Adrenal gland (tissue), 19 donors: ENCODE measurements at regions of chr1 and their contacts with region 1.

Region 1: GRCh38 chr1:55284852-55285251 is 69.7 kb upstream of the USP24 start:
- DNase-seq: peak in 6 of 7 donors; percentile 30 to 69 (median 44)
- H3K4me3 ChIP-seq: no peak overlapping the region
- H3K27ac ChIP-seq: no peak overlapping the region
- H3K4me1 ChIP-seq: no peaks in the 10 kb centered on the region
- H3K27me3 ChIP-seq: peaks cover 4% of the 10 kb centered on the region
- CTCF ChIP-seq: peak in 5 of 6 experiments; percentile 32 to 75 (median 55)
- POLR2A ChIP-seq: no peak

Region 2: GRCh38 chr1:54781023-54781723 is 503.7 kb before region 1 on chr1:
- intact Hi-C with region 1: no loop called
- DNase-seq: no peak
- H3K4me3 ChIP-seq: no peak overlapping the region
- H3K27ac ChIP-seq: no peak overlapping the region
- H3K4me1 ChIP-seq: no peaks in the 10 kb centered on the region
- H3K27me3 ChIP-seq: peaks cover 9% of the 10 kb centered on the region
- CTCF ChIP-seq: no peak
- POLR2A ChIP-seq: no peak

Region 3: DNA sequence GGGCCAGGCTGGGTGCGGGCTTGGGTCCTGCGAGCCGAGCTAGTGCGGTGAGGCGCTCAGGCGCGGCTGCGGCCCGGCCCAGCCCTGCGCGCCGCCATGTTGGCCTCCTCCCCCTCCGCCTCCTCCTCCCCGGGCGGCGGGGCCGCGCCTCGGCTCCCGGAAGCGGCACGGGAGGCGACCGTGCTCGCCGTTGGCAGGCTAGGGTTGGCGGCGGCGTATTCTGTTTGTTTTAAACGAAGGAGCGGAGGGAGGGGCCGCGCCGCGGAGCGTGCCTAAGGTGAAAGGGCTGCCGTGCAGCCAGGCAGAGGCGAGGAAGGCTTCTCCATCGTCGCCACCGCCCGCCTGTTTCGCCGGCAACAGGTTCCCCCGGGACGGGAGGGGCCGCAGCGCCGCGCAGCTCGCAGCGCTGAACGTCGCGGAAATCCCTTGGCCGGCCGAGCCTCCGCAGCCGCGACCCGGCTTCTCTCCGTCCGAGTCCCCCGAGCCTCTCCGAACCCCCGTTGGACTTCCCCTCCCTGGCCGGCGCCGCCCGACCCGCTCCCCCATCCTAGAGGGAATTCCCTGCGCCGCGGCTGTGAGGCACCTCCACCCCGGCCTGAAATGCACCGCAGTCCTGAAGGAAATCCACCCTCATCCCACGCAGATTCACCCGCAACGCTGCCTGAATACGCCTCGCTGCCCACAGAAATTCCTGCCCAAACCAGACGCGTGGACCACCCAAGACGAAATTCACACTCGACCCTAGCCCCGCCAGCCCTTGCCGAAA is 69.4 kb before region 1 on chr1 and contains the start of gene USP24:
- intact Hi-C with region 1: no loop called
- DNase-seq: peak; percentile 59 to 81 (median 72)
- H3K4me3 ChIP-seq: peak within 1 kb of the TSS; percentile 68 to 97 (median 92)
- H3K27ac ChIP-seq: peak within 1 kb of the TSS; percentile 82 to 96 (median 93)
- H3K4me1 ChIP-seq: peaks cover 33 to 35% of the 10 kb centered on the region in 2 donors
- H3K27me3 ChIP-seq: no peaks in the 10 kb centered on the region
- CTCF ChIP-seq: no peak
- POLR2A ChIP-seq: peak; percentile 64 to 69
- total RNA-seq, gene USP24: 20.8 to 45.1 (median 26.7) TPM

Region 4: DNA sequence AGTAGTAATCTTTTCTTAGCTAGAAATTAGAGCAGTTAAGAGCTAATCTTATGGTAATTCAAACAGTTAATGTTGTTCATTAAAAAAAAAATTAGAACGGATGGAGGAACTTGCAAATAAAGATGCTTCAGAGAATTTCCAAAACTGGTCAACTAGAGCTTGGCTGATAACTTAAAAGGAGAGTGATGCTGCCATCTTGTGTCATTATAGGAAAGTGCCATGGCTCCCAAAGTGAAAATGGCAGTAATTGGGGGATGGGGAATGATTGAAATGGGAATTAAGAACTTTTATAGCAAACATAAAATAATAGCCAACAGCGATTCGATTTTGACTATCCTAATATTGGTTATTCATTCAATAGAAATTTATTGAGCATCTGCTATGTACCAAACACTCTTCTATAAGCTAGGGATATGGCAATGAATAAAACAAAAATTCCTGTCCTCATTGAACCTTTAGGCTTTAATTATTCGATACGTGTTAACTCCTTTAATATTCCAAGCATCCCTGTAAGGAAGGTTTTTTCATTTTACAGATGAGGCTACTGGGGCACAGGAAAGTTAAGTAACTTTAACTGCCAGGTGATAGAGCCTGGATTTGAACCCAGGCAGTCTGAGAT is 1300.2 kb after region 1 on chr1:
- intact Hi-C with region 1: loop called (anchors 5 kb)
- DNase-seq: peak in 4 of 7 donors; percentile 25 to 66 (median 54)
- H3K4me3 ChIP-seq: no peak overlapping the region
- H3K27ac ChIP-seq: no peak overlapping the region
- H3K4me1 ChIP-seq: peaks cover 0 to 13% of the 10 kb centered on the region in 2 donors
- H3K27me3 ChIP-seq: no peaks in the 10 kb centered on the region
- CTCF ChIP-seq: peak; percentile 56 to 96 (median 88)
- POLR2A ChIP-seq: no peak

Region 5: DNA sequence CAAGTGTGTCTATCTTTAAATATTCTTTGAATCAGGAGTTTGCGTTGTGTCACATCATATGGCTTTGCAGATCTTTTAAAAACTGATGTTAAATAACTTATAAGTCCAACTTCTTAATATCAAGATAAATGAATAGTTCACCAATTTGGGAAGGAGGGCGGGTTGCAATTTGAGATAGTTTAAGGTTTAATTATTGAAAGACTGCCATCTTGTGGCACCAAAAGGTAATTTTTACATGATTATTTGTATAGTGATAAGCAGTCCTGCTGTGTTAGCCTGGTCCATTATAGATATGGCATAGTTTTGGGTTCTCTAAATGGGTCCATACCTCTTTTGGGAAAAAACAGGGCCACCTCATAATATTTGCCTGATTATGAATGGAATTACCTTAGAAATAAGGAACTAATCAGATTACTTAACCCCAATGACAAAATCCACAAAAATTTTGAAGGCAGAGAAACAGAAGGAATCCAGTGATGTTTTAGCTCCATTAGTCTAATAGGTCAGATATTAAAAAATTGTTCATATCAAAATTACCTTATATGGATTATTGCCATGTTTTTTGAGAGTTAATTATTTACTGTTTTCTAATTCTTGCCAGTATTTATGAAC is 1424.5 kb after region 1 on chr1:
- intact Hi-C with region 1: loop called in 1 of 2 experiments (anchors 5 kb)
- DNase-seq: peak in 3 of 7 donors; percentile 4 to 21 (median 9)
- H3K4me3 ChIP-seq: no peak overlapping the region
- H3K27ac ChIP-seq: no peak overlapping the region
- H3K4me1 ChIP-seq: no peaks in the 10 kb centered on the region
- H3K27me3 ChIP-seq: no peaks in the 10 kb centered on the region
- CTCF ChIP-seq: peak; percentile 53 to 75 (median 61)
- POLR2A ChIP-seq: no peak

Region 6: DNA sequence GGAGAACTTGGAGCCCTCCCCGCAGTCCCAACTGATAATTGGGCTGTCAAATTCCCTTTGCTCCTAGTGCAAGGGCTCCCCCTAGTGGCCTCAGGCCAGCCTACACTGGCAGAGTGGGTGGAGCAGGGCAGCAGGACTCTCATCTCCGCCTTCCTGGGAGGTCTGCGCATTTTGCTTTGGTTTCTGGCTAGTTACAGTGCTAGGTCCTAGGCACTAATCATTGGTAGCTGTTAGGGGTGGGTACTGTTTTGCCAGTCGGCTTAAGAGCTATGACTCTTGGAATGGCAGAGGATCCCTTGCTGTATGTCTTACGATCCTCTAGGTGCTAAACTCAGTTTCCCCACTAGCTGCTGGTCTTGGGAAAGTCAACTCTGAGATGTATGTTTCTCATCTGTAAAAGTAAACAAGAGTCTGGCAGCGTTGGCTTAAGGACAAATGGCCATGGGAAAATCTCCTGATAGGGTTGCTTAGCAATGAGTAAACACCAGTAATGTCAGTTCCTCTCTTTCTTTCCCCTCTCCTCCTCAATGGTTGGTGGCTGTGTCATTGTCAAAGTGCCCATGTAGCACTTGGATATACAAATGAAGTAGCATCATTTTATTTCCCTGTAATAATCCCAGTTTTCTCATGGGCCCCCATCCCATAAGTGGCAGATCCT is 1536.4 kb after region 1 on chr1:
- intact Hi-C with region 1: loop called in 1 of 2 experiments (anchors 10 kb)
- DNase-seq: peak; percentile 75 to 90 (median 81)
- H3K4me3 ChIP-seq: no peak overlapping the region
- H3K27ac ChIP-seq: no peak overlapping the region
- H3K4me1 ChIP-seq: no peaks in the 10 kb centered on the region
- H3K27me3 ChIP-seq: no peaks in the 10 kb centered on the region
- CTCF ChIP-seq: peak; percentile 79 to 97 (median 88)
- POLR2A ChIP-seq: no peak